ENCODE measurements at regions of chr5 and their contacts with region 1.

Region 1: DNA sequence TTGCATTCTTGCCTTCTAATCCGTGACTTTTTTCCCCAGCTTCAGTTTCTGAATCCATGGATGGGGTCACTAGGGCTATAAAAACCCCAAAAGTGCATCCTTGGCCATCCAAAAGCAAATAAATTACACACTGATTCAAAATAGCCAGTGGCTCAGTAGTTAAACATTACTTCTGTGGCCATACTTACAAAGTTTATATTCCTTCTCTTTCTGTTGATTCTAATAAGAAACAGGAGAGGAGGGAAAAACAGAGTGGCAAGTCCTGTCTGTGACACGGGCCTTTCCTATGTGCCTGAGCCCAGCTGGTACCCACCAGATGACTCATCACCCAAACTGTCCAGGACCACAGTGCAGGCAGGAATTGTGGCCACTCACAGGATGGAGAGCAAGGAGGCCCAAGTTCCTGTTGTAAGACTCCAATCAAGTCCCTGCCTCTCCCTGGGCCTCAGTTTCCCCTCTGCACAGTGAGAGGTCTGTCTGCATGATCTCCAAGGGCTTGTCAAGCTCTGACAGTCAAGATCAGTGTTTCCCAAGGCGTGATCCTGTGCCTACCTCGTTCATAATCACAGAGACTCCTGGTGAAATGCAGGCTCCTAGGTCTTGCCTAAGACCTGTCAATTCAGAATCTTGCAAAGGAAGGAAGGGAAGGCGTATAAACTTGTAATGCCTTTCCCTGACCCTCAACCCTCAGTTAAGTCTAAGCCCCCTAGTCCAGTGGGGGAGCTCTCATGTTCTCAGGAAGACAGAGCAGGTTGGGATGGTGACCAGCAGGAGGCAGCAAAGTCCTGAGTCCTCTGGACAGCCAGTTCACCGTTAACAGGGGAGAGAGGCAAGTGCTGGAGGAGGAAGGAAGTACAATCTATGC is 29.5 kb downstream of the TNIP1 start:
- DNase-seq: peak; percentile 86
- ATAC-seq: peak; percentile 90
- H3K4me3 ChIP-seq: no peak overlapping the region
- H3K4me3 Mint-ChIP-seq: no peak overlapping the region
- H3K27ac ChIP-seq: no peak overlapping the region
- H3K27ac Mint-ChIP-seq: peak overlapping the region; percentile 66
- H3K4me1 ChIP-seq: peaks cover 15 to 22% of the 10 kb centered on the region in 2 donors
- H3K4me1 Mint-ChIP-seq: peaks cover 27% of the 10 kb centered on the region
- H3K27me3 ChIP-seq: no peaks in the 10 kb centered on the region
- H3K27me3 Mint-ChIP-seq: no peaks in the 10 kb centered on the region
- CTCF ChIP-seq: peak; percentile 84

Region 2: GRCh38 chr5:150946351-150946905 is 104.9 kb before region 1 on chr5:
- CTCF ChIA-PET with region 1: no interaction called
- POLR2A ChIA-PET with region 1: no interaction called
- intact Hi-C with region 1: no loop called
- DNase-seq: no peak
- ATAC-seq: no peak
- H3K4me3 ChIP-seq: no peak overlapping the region
- H3K4me3 Mint-ChIP-seq: peak overlapping the region; percentile 4
- H3K27ac ChIP-seq: no peak overlapping the region
- H3K27ac Mint-ChIP-seq: no peak overlapping the region
- H3K4me1 ChIP-seq: no peaks in the 10 kb centered on the region
- H3K4me1 Mint-ChIP-seq: no peaks in the 10 kb centered on the region
- H3K27me3 ChIP-seq: peaks cover 0 to 15% (median 4%) of the 10 kb centered on the region in 4 experiments
- H3K27me3 Mint-ChIP-seq: peaks cover 25% of the 10 kb centered on the region
- CTCF ChIP-seq: no peak

Region 3: DNA sequence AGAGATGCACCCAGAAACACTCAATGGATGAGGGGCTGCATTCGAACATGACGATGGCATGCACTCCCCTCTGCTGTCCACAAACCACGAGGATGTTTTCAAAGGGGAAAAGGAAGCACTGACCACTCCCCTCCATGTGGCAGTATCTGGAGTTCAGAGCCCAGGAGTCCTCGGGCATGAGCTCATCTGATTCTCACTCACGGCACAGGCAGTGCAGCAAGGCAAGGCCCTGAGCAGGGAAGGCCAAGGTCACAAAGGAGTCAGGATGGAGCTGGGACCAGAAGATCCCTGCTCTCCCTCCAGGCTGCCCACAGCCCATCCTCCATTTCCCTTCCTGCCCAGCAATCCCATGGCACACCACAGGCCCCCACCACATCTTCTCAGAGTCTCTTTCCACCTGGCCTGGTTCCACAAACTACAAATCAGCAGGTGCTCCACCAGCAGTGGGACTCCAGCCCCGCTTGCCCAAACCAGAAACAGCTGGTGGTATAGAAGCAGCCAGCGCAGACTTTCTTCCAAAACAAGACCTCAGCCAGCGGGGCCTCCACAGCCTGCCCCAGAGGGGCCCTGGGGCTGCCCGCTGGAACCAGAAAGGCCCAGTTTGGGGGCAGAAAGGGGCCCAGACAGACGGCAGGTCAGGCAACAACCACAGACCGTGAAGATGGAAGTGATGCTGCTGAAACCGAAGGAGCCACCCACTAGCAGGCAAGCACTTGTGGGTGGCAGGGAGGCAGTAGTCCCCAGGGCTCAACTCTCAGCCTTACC is 17.3 kb after region 1 on chr5:
- CTCF ChIA-PET with region 1: interaction called, 17 read pairs
- POLR2A ChIA-PET with region 1: no interaction called
- intact Hi-C with region 1: no loop called
- DNase-seq: peak; percentile 43
- ATAC-seq: peak; percentile 78
- H3K4me3 ChIP-seq: peak overlapping the region in 1 of 5 experiments; percentile 5
- H3K4me3 Mint-ChIP-seq: peak overlapping the region; percentile 52
- H3K27ac ChIP-seq: peak overlapping the region in 1 of 2 donors; percentile 62
- H3K27ac Mint-ChIP-seq: peak overlapping the region; percentile 88
- H3K4me1 ChIP-seq: peaks cover 36 to 55% of the 10 kb centered on the region in 2 donors
- H3K4me1 Mint-ChIP-seq: peaks cover 73% of the 10 kb centered on the region
- H3K27me3 ChIP-seq: no peaks in the 10 kb centered on the region
- H3K27me3 Mint-ChIP-seq: no peaks in the 10 kb centered on the region
- CTCF ChIP-seq: no peak

Region 4: DNA sequence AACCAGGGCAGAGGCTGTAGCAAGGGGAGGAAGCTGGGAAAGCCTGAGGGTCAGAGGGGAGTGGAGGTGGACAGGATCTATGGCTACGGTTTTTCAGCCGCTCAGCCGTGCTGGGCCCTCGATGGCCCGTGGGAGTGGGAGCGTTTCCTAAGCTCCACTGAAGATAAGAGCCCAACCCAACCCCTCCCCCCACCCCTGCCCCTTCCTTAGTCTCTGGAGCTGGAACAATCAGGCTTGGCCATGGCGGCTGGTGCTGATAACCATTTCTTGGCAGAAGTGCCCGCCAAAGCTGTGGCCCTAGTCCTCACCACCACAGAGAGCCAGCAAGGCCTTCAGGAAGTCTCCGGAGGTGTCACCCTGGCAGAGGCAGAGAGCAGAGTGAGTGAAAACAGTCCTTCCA is 49.9 kb after region 1 on chr5:
- CTCF ChIA-PET with region 1: interaction called, 24 read pairs
- POLR2A ChIA-PET with region 1: interaction called, 4 read pairs
- intact Hi-C with region 1: no loop called
- DNase-seq: no peak
- ATAC-seq: no peak
- H3K4me3 ChIP-seq: no peak overlapping the region
- H3K4me3 Mint-ChIP-seq: no peak overlapping the region
- H3K27ac ChIP-seq: peak overlapping the region in 1 of 2 donors; percentile 21
- H3K27ac Mint-ChIP-seq: no peak overlapping the region
- H3K4me1 ChIP-seq: peaks cover 22 to 32% of the 10 kb centered on the region in 2 donors
- H3K4me1 Mint-ChIP-seq: peaks cover 50% of the 10 kb centered on the region
- H3K27me3 ChIP-seq: no peaks in the 10 kb centered on the region
- H3K27me3 Mint-ChIP-seq: no peaks in the 10 kb centered on the region
- CTCF ChIP-seq: no peak

Region 5: GRCh38 chr5:151134238-151134637 is 82.9 kb after region 1 on chr5:
- CTCF ChIA-PET with region 1: interaction called, 14 read pairs
- POLR2A ChIA-PET with region 1: no interaction called
- intact Hi-C with region 1: no loop called
- DNase-seq: no peak
- ATAC-seq: peak; percentile 37
- H3K4me3 ChIP-seq: peak overlapping the region in 1 of 5 experiments; percentile 7
- H3K4me3 Mint-ChIP-seq: peak overlapping the region; percentile 62
- H3K27ac ChIP-seq: peak overlapping the region; percentile 48 to 70
- H3K27ac Mint-ChIP-seq: peak overlapping the region; percentile 87
- H3K4me1 ChIP-seq: peaks cover 40 to 76% of the 10 kb centered on the region in 2 donors
- H3K4me1 Mint-ChIP-seq: peaks cover 81% of the 10 kb centered on the region
- H3K27me3 ChIP-seq: no peaks in the 10 kb centered on the region
- H3K27me3 Mint-ChIP-seq: no peaks in the 10 kb centered on the region
- CTCF ChIP-seq: no peak

Region 6: GRCh38 chr5:151164686-151165392 is 113.5 kb after region 1 on chr5:
- CTCF ChIA-PET with region 1: interaction called, 260 read pairs
- POLR2A ChIA-PET with region 1: interaction called, 3 read pairs
- intact Hi-C with region 1: loop called (anchors 1 kb)
- DNase-seq: peak; percentile 89
- ATAC-seq: peak; percentile 97
- H3K4me3 ChIP-seq: no peak overlapping the region
- H3K4me3 Mint-ChIP-seq: no peak overlapping the region
- H3K27ac ChIP-seq: no peak overlapping the region
- H3K27ac Mint-ChIP-seq: peak overlapping the region; percentile 72
- H3K4me1 ChIP-seq: peaks cover 21 to 28% of the 10 kb centered on the region in 2 donors
- H3K4me1 Mint-ChIP-seq: peaks cover 36% of the 10 kb centered on the region
- H3K27me3 ChIP-seq: no peaks in the 10 kb centered on the region
- H3K27me3 Mint-ChIP-seq: no peaks in the 10 kb centered on the region
- CTCF ChIP-seq: peak; percentile 95

Region 7: GRCh38 chr5:151315998-151316597 is 264.8 kb after region 1 on chr5:
- CTCF ChIA-PET with region 1: interaction called, 28 read pairs
- POLR2A ChIA-PET with region 1: no interaction called
- intact Hi-C with region 1: no loop called
- DNase-seq: peak; percentile 65
- ATAC-seq: peak; percentile 76
- H3K4me3 ChIP-seq: no peak overlapping the region
- H3K4me3 Mint-ChIP-seq: no peak overlapping the region
- H3K27ac ChIP-seq: no peak overlapping the region
- H3K27ac Mint-ChIP-seq: no peak overlapping the region
- H3K4me1 ChIP-seq: peaks cover 9 to 16% of the 10 kb centered on the region in 2 donors
- H3K4me1 Mint-ChIP-seq: peaks cover 10% of the 10 kb centered on the region
- H3K27me3 ChIP-seq: no peaks in the 10 kb centered on the region
- H3K27me3 Mint-ChIP-seq: no peaks in the 10 kb centered on the region
- CTCF ChIP-seq: peak; percentile 95

Region 8: DNA sequence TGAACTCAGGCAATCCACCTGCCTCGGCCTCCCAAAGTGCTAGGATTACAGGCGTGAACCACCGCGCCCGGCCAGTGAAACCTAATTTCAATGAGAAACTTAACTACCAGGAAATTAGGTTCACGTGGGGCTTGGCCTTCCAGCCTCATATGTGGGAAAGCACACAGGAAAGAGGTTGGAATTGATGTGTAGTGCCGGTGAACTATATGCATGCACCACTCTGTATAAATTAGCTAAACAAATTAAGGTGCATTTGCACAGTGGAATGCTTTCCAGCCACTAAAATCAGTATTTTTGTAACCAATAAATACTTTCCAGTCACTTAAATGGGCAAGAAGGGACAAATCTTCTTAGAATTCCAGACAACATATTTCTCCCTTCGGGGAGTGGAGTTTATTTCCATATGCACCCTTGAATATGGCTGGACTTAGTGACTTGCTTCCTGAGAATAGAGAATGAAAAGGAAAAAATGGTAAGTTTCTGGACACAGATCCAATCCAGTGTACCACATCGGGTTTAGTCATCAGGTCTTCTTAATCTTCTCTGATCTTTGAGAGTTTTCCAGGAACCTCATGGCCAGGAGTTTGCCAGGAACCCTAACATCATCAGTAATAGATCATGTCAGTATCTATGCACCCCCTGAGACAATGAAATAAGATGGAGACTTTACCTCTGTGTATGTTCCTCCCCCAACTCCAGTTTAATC is 682.2 kb after region 1 on chr5:
- CTCF ChIA-PET with region 1: no interaction called
- POLR2A ChIA-PET with region 1: no interaction called
- intact Hi-C with region 1: no loop called
- DNase-seq: no peak
- ATAC-seq: no peak
- H3K4me3 ChIP-seq: no peak overlapping the region
- H3K4me3 Mint-ChIP-seq: no peak overlapping the region
- H3K27ac ChIP-seq: no peak overlapping the region
- H3K27ac Mint-ChIP-seq: no peak overlapping the region
- H3K4me1 ChIP-seq: no peaks in the 10 kb centered on the region
- H3K4me1 Mint-ChIP-seq: no peaks in the 10 kb centered on the region
- H3K27me3 ChIP-seq: no peaks in the 10 kb centered on the region
- H3K27me3 Mint-ChIP-seq: no peaks in the 10 kb centered on the region
- CTCF ChIP-seq: no peak

Region 9: DNA sequence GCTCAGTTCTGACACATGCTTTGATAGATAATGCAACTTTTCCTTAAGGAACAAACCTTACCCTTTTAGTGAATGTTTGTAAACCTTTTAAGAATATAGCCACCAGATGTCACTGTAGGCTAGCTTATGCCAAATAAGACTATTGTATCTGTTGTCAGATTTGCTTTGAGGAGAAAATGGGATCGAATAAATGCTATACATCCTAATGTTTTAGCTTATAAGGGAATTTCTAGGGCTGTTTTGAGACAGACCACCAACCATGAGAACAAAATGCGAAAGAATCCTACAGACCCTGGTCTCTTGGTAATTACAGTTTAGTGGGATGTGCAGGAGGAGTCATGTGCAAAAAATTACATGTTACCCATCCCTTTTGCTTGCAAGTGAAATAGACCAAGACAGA is 1481.4 kb after region 1 on chr5:
- CTCF ChIA-PET with region 1: no interaction called
- POLR2A ChIA-PET with region 1: no interaction called
- intact Hi-C with region 1: no loop called
- DNase-seq: peak; percentile 42
- ATAC-seq: no peak
- H3K4me3 ChIP-seq: no peak overlapping the region
- H3K4me3 Mint-ChIP-seq: no peak overlapping the region
- H3K27ac ChIP-seq: no peak overlapping the region
- H3K27ac Mint-ChIP-seq: no peak overlapping the region
- H3K4me1 ChIP-seq: peaks cover 4 to 5% of the 10 kb centered on the region in 2 donors
- H3K4me1 Mint-ChIP-seq: peaks cover 10% of the 10 kb centered on the region
- H3K27me3 ChIP-seq: no peaks in the 10 kb centered on the region
- H3K27me3 Mint-ChIP-seq: peaks cover 3% of the 10 kb centered on the region
- CTCF ChIP-seq: peak; percentile 40

Measured in B cell (primary cell).